Posterior cingulate gyrus (tissue), 11 donors: ENCODE measurements at regions of chr21 and their contacts with region 1.

Region 1: DNA sequence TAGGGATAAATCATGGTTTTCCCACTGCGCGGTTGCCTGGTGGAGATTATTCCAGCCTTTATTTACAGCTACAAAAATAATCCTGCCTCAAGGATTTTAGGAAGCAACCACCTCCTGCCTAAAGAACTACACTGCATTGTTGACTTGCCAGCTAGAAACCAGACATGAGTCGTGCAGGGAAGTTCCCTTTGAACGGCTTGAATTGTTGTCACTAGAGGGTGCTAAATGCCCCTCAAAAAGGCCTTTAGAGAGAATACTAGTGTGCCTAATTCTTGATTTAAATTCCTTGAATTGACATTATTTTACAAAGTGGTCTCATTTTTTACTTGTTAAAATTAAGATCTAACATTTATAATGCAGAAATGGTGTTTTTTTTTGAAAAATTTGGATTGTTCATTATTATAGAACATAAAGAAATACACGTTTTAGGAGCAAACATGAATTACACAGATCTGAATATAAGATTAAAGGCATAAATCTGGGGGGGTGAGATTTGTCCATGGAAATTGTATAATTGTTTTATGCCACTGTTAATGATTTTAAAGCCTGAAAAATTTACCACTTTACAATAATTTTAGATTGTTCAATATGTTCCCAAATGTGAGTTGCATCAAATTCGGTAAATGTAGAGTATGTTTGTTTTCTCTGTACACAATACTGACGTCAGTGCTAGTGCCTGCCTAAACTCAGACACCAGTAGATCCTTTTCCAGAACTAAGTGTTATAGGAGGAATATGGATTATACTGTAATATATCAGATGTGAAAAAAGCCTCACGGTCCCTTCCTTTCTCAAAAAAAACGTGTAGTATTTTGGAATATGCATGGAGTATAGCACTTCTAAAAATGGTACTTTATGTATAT is 7.6 kb upstream of the ERG start:
- DNase-seq: peak in 3 of 10 donors; percentile 16 to 26 (median 21)

Region 2: DNA sequence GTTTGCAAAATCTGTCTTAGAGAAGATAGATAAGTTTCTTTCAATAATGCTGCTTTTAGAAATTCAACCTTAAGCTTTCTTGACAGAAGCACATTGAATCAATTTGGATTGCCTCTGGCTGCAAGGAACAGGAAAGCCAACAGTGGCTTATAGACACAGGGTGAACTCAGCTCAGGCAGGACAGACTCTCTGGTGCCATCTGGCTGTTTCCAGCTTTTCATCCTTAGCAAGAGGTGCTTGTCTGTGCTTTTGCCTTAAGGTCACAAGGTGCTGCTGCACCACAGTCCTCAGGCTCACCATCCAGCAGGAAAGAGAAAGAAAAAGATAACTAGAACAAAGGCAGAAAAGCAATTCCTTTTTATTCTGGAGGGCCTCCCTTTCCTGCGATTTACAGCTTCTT is 206.2 kb after region 1 on chr21:
- intact Hi-C with region 1: loop called (anchors 10 kb)
- DNase-seq: peak in 1 of 10 donors; percentile 14

Region 3: DNA sequence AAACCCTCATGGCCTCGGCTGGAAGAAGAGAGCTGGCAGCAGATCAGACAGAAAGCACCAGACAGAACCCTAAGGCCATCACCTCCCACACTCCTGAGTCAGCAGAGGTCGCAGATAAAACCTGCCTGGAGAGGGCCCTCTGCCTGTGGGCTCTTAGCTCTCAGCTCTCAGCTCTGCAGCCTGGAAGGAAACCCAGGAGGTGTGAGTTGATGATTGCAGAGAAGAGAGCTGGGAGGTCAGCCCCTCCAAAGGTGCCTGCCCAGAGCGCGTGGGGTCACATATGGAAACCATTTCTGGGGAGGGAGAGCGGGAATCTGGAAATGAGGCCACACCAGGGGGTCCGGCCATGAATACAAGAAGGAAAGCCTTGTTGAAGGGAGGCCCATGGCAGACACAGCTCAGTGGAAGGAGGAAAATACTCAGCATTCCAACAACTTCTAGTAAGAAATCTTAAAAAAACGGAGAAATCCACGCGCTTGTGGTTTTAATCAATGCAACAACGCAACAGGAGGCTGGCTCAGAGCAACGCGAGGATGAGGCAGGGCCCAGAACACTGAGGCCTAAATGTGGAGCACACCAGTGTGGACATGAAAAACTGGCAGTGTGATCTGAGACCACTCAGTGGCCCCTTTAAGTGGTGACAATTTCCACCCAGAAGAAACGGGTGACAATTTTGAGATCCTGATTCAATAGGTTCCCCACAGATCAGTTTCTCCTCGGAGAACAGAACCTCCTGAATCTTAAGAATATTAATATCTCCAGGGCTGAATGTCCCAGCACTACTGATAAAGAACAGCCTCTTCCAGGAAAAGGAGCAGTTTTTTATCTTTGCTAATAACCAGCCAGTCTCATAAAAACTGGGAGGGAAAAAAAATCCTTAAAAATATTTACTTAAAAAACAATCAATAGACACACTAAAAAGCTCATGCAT is 631.6 kb after region 1 on chr21:
- intact Hi-C with region 1: loop called (anchors 5 kb)
- DNase-seq: no peak

Region 4: GRCh38 chr21:39175154-39175553 is 669.3 kb after region 1 on chr21:
- intact Hi-C with region 1: loop called (anchors 5 kb)
- DNase-seq: no peak